Right lobe of liver (tissue), 6 donors: ENCODE measurements at regions of chr1 and their contacts with region 1.

Region 1: GRCh38 chr1:23422241-23423030 is 2.1 kb downstream of the TCEA3 start:
- DNase-seq: peak; percentile 76 to 86 (median 83)
- ATAC-seq: peak; percentile 26 to 59 (median 46)
- H3K4me3 ChIP-seq: peak overlapping the region; percentile 10 to 87 (median 80)
- H3K27ac ChIP-seq: peak overlapping the region; percentile 14 to 79 (median 74)
- H3K4me1 ChIP-seq: peaks cover 0 to 43% (median 21%) of the 10 kb centered on the region in 4 donors
- H3K27me3 ChIP-seq: no peaks in the 10 kb centered on the region
- CTCF ChIP-seq: no peak
- POLR2A ChIP-seq: peak; percentile 18

Region 2: GRCh38 chr1:23322770-23323169 is 99.7 kb before region 1 on chr1:
- intact Hi-C with region 1: no loop called
- DNase-seq: no peak
- ATAC-seq: no peak
- H3K4me3 ChIP-seq: no peak overlapping the region
- H3K27ac ChIP-seq: no peak overlapping the region
- H3K4me1 ChIP-seq: no peaks in the 10 kb centered on the region
- H3K27me3 ChIP-seq: no peaks in the 10 kb centered on the region
- CTCF ChIP-seq: no peak
- POLR2A ChIP-seq: no peak

Region 3: DNA sequence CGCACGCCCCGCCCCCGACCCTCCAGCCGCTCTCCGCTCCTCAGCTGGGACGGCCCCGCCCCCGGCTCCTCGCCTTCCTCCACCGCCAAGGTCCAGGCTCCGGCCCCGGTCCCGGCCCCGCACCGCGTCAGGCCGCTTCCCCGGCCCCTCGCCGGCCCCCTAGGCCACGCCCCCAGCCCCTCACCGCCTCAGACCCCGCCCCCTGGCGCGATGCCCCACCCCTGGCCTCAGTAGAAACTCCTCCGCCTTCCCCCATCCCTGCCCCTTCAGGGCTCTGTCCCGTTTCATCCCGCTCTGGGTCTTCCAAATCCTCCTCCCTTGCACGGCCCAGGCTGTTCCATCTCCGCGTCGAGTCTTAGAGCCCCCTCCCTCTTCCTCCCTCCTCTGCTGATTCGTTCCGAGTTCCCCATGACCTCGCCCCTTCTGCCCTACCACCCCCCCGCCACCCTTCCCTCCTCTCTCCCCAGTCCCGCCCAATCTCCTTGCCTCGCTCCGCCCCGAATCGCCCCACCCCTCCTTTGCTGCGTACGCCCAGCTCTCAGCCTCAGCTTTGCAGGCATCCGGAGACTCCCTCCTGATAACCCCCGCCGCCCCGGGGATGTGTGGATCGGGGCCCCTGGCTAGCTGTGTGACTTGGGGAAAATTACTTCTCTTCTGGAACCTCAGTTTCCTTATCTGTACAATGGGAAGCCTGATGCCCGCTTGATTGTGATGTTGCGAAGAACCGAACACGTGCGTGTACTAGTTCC is 62.0 kb after region 1 on chr1:
- intact Hi-C with region 1: loop called in 1 of 2 experiments (anchors 10 kb)
- DNase-seq: peak; percentile 92 to 93 (median 92)
- ATAC-seq: peak; percentile 87 to 93 (median 88)
- H3K4me3 ChIP-seq: peak overlapping the region; percentile 79 to 93 (median 87)
- H3K27ac ChIP-seq: peak overlapping the region in 1 of 3 donors; percentile 73
- H3K4me1 ChIP-seq: peaks cover 0 to 12% (median 3%) of the 10 kb centered on the region in 4 donors
- H3K27me3 ChIP-seq: no peaks in the 10 kb centered on the region
- CTCF ChIP-seq: no peak
- POLR2A ChIP-seq: no peak